ENCODE measurements at regions of chr16 and their contacts with region 1.

Region 1: GRCh38 chr16:11768849-11769248 is 26.2 kb upstream of the TXNDC11 start:
- DNase-seq: peak; percentile 82
- H3K4me3 ChIP-seq: peak overlapping the region; percentile 48
- H3K27ac ChIP-seq: peak overlapping the region; percentile 85
- H3K4me1 ChIP-seq: peaks cover 59% of the 10 kb centered on the region
- CTCF ChIP-seq: no peak

Region 2: DNA sequence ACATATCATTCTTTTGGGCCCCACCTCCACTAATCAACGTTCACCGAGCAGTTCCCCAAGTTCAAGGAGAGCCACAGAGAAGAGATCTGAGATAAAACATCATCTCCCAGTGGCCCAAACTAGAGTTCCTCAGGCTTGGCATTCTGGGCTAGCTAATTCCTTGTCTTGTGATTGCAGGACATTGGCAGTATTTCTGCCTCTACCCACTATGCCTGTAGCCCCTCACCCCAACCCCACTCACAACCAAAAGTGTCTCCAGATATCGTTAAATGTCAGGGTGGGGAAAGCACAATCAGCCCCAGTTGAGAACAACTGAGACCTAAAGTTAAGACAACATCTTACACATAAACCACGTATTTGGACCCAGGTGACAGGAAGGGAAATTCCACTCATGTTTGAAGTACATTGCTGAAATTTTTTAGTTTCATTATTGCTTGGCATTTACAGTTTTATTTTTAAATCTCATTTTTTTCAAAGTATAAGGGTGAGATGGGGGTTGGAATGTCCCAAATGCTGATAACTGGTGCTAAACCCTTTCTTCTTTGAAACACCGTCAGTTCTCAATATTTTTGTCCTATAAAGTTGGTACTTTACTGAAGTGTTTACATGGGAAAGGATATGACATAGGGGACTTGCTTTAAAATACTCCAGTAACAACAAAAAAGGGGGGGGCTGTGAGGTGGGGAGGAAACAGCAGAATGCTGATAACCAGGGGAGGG is 14.6 kb after region 1 on chr16:
- CTCF ChIA-PET with region 1: no interaction called
- POLR2A ChIA-PET with region 1: interaction called, 18 read pairs
- intact Hi-C with region 1: no loop called
- DNase-seq: peak; percentile 47
- H3K4me3 ChIP-seq: peak overlapping the region; percentile 53
- H3K27ac ChIP-seq: peak overlapping the region; percentile 85
- H3K4me1 ChIP-seq: peaks cover 63% of the 10 kb centered on the region
- CTCF ChIP-seq: no peak

Region 3: GRCh38 chr16:11797166-11797956 is 28.5 kb after region 1 on chr16 and contains the start of gene ZC3H7A:
- CTCF ChIA-PET with region 1: interaction called, 3 read pairs
- POLR2A ChIA-PET with region 1: interaction called, 13 read pairs
- intact Hi-C with region 1: loop called (anchors 2 kb)
- DNase-seq: peak; percentile 98
- H3K4me3 ChIP-seq: peak within 1 kb of the TSS; percentile 92
- H3K27ac ChIP-seq: peak within 1 kb of the TSS; percentile 79
- H3K4me1 ChIP-seq: peaks cover 62% of the 10 kb centered on the region
- CTCF ChIP-seq: peak; percentile 66
- total RNA-seq, gene ZC3H7A: 28.6 and 32.1 TPM in 2 replicates

Region 4: GRCh38 chr16:11880007-11880406 is 111.2 kb after region 1 on chr16:
- CTCF ChIA-PET with region 1: no interaction called
- POLR2A ChIA-PET with region 1: no interaction called
- intact Hi-C with region 1: no loop called
- DNase-seq: no peak
- H3K4me3 ChIP-seq: no peak overlapping the region
- H3K27ac ChIP-seq: no peak overlapping the region
- H3K4me1 ChIP-seq: no peaks in the 10 kb centered on the region
- CTCF ChIP-seq: peak; percentile 35

Region 5: GRCh38 chr16:12141073-12141951 is 372.5 kb after region 1 on chr16:
- CTCF ChIA-PET with region 1: no interaction called
- POLR2A ChIA-PET with region 1: no interaction called
- intact Hi-C with region 1: no loop called
- DNase-seq: no peak
- H3K4me3 ChIP-seq: no peak overlapping the region
- H3K27ac ChIP-seq: no peak overlapping the region
- H3K4me1 ChIP-seq: peaks cover 28% of the 10 kb centered on the region
- CTCF ChIP-seq: no peak

Region 6: DNA sequence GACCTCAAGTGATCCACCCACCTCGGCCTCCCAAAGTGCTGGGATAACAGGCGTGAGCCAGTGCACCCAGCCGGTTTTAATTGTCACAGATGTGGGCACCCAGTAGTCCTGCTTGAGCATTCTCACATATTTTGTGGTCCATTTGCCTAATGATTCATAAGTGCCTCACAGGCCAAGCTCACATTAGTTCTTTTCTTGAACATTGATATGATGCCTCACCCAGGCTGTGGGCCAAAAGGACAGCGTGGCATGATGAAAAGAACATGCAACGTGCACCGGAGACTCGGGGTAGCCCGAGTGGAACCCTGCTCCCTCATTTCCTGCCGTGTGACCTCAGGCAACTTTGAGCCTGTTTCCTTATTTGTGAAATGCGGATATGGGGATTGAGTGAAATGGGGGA is 389.6 kb after region 1 on chr16:
- CTCF ChIA-PET with region 1: no interaction called
- POLR2A ChIA-PET with region 1: no interaction called
- intact Hi-C with region 1: no loop called
- DNase-seq: no peak
- H3K4me3 ChIP-seq: no peak overlapping the region
- H3K27ac ChIP-seq: no peak overlapping the region
- H3K4me1 ChIP-seq: no peaks in the 10 kb centered on the region
- CTCF ChIP-seq: no peak

Measured in OCI-LY7 (cell line).